Dendritic cell treated with granulocyte-macrophage colony-stimulating factor and Interleukin-4, amounts not matched to agents 40 ng/mL and 50 ng/mL, for 4 days (primary cell): ENCODE measurements at regions of chr15 and their contacts with region 1.

Region 1: GRCh38 chr15:38406436-38406835 is 47.5 kb upstream of the FAM98B start:
- H3K4me3 Mint-ChIP-seq: no peak overlapping the region
- H3K27ac Mint-ChIP-seq: no peak overlapping the region
- H3K4me1 Mint-ChIP-seq: peaks cover 14% of the 10 kb centered on the region
- H3K27me3 Mint-ChIP-seq: peaks cover 5% of the 10 kb centered on the region

Region 2: GRCh38 chr15:38362355-38362754 is 44.1 kb before region 1 on chr15:
- intact Hi-C with region 1: loop called (anchors 5 kb)
- H3K4me3 Mint-ChIP-seq: no peak overlapping the region
- H3K27ac Mint-ChIP-seq: no peak overlapping the region
- H3K4me1 Mint-ChIP-seq: peaks cover 5% of the 10 kb centered on the region
- H3K27me3 Mint-ChIP-seq: peaks cover 3% of the 10 kb centered on the region